ENCODE measurements at regions of chr11 and their contacts with region 1.

Region 1: GRCh38 chr11:85170226-85170625 is 456.9 kb downstream of the DLG2 start:
- DNase-seq: peak; percentile 63 to 99
- H3K4me3 ChIP-seq: peak overlapping the region; percentile 33; the same call in 1 of the 2 replicates
- H3K27ac ChIP-seq: peak overlapping the region; percentile 97
- H3K4me1 ChIP-seq: peaks cover 53% of the 10 kb centered on the region
- H3K27me3 ChIP-seq: no peaks in the 10 kb centered on the region
- CTCF ChIP-seq: no peak

Region 2: GRCh38 chr11:84800755-84801346 is 369.4 kb before region 1 on chr11:
- CTCF ChIA-PET with region 1: no interaction called
- POLR2A ChIA-PET with region 1: no interaction called
- intact Hi-C with region 1: loop called (anchors 5 kb)
- DNase-seq: peak; percentile 9 to 40
- H3K4me3 ChIP-seq: no peak overlapping the region
- H3K27ac ChIP-seq: no peak overlapping the region
- H3K4me1 ChIP-seq: no peaks in the 10 kb centered on the region
- H3K27me3 ChIP-seq: 0 out of 2 replicates have a peak, but pooled peaks cover 6% of the 10 kb centered on the region
- CTCF ChIP-seq: peak; percentile 71

Region 3: GRCh38 chr11:84819128-84819527 is 351.1 kb before region 1 on chr11:
- CTCF ChIA-PET with region 1: no interaction called
- POLR2A ChIA-PET with region 1: interaction called, 10 read pairs
- intact Hi-C with region 1: loop called (anchors 2 kb)
- DNase-seq: peak in 1 of 2 experiments; percentile 53
- H3K4me3 ChIP-seq: no peak overlapping the region
- H3K27ac ChIP-seq: no peak overlapping the region
- H3K4me1 ChIP-seq: peaks cover 22% of the 10 kb centered on the region; the same call in 1 of the 2 replicates
- H3K27me3 ChIP-seq: no peaks in the 10 kb centered on the region
- CTCF ChIP-seq: no peak

Region 4: DNA sequence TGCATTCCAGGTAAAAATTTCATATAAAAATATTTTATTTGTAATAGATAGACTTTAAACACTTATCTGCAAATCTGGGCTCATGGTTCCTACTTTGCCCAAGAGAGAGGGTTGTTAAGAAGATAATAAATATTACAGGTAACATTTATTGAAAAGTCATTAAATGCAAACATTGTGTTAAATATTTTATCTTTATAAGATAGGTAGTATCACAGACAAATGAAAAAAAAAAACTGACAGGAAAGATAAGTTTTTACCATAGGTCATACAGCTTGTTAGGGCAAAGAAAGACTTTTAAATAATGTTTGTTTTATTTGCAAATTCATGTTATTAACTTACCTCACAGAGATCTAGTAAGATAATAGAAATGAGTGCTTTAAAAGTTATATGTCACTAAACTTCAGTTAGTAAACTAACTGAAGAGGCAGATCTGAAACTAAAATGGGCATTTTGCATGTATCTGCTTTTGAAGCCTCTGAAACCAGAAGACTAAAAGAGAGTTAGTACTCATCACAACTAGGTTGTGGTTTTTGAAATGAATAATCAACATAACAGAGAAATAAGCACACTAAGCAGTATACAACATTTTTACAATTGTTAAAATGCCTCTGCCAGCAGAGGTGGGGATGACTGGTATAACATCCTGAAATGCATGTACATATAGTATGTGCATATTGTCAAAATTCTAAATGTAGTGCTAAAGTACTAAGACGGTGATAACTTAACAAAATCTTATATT is 107.7 kb before region 1 on chr11:
- CTCF ChIA-PET with region 1: no interaction called
- POLR2A ChIA-PET with region 1: no interaction called
- intact Hi-C with region 1: no loop called
- DNase-seq: no peak
- H3K4me3 ChIP-seq: no peak overlapping the region
- H3K27ac ChIP-seq: no peak overlapping the region
- H3K4me1 ChIP-seq: no peaks in the 10 kb centered on the region
- H3K27me3 ChIP-seq: no peaks in the 10 kb centered on the region
- CTCF ChIP-seq: no peak

Region 5: GRCh38 chr11:85076373-85077330 is 93.6 kb before region 1 on chr11:
- CTCF ChIA-PET with region 1: no interaction called
- POLR2A ChIA-PET with region 1: no interaction called
- intact Hi-C with region 1: loop called (anchors 2 kb)
- DNase-seq: peak in 1 of 2 experiments; percentile 9
- H3K4me3 ChIP-seq: no peak overlapping the region
- H3K27ac ChIP-seq: no peak overlapping the region
- H3K4me1 ChIP-seq: no peaks in the 10 kb centered on the region
- H3K27me3 ChIP-seq: no peaks in the 10 kb centered on the region
- CTCF ChIP-seq: no peak

Region 6: DNA sequence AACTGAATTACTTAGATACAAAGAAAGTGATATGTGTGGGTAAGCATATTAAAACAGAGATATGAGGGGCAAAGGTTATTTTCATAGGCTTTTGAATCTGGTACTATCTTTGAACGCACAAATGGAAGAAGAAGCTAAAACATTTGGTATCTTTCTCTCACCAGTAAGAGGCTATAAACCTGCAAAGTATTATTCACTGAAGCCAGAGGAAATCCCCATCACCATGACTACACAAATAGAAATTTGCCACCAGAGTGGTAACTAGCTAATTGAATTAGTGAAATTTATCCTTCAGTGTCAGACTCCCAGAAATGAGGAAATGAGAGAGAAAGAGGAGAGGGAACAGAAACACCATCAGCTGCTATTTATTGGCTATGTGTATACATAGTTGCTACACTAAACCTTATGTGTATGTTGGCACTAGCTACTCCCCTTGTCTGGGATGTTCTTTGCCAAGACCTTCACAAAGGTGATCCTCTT is 46.4 kb before region 1 on chr11:
- CTCF ChIA-PET with region 1: no interaction called
- POLR2A ChIA-PET with region 1: no interaction called
- intact Hi-C with region 1: loop called (anchors 5 kb)
- DNase-seq: no peak
- H3K4me3 ChIP-seq: no peak overlapping the region
- H3K27ac ChIP-seq: no peak overlapping the region
- H3K4me1 ChIP-seq: no peaks in the 10 kb centered on the region
- H3K27me3 ChIP-seq: no peaks in the 10 kb centered on the region
- CTCF ChIP-seq: no peak

Region 7: GRCh38 chr11:85249482-85249881 is 79.3 kb after region 1 on chr11:
- CTCF ChIA-PET with region 1: no interaction called
- POLR2A ChIA-PET with region 1: no interaction called
- intact Hi-C with region 1: no loop called
- DNase-seq: no peak
- H3K4me3 ChIP-seq: no peak overlapping the region
- H3K27ac ChIP-seq: no peak overlapping the region
- H3K4me1 ChIP-seq: no peaks in the 10 kb centered on the region
- H3K27me3 ChIP-seq: no peaks in the 10 kb centered on the region
- CTCF ChIP-seq: no peak